Vagina (tissue), 2 donors: ENCODE measurements at regions of chr16 and their contacts with region 1.

Region 1: GRCh38 chr16:61814726-61815347 is 221.4 kb downstream of the CDH8 start:
- DNase-seq: no peak
- H3K4me3 ChIP-seq: no peak overlapping the region
- H3K27ac ChIP-seq: no peak overlapping the region
- H3K4me1 ChIP-seq: no peaks in the 10 kb centered on the region
- H3K27me3 ChIP-seq: no peaks in the 10 kb centered on the region
- CTCF ChIP-seq: no peak
- POLR2A ChIP-seq: no peak

Region 2: GRCh38 chr16:61993076-61993475 is 178.2 kb after region 1 on chr16:
- intact Hi-C with region 1: loop called (anchors 5 kb)
- DNase-seq: no peak
- H3K4me3 ChIP-seq: no peak overlapping the region
- H3K27ac ChIP-seq: no peak overlapping the region
- H3K4me1 ChIP-seq: no peaks in the 10 kb centered on the region
- H3K27me3 ChIP-seq: no peaks in the 10 kb centered on the region
- CTCF ChIP-seq: no peak
- POLR2A ChIP-seq: no peak